Posterior vena cava (tissue), 2 donors: ENCODE measurements at regions of chr14 and their contacts with region 1.

Region 1: GRCh38 chr14:102249041-102249440 is 55.9 kb downstream of the MOK start:
- DNase-seq: peak; percentile 42

Region 2: GRCh38 chr14:101761032-101761880 is 487.8 kb before region 1 on chr14 and contains the start of gene PPP2R5C:
- intact Hi-C with region 1: no loop called
- DNase-seq: peak; percentile 97
- total RNA-seq, gene PPP2R5C: 132 to 135 TPM

Region 3: DNA sequence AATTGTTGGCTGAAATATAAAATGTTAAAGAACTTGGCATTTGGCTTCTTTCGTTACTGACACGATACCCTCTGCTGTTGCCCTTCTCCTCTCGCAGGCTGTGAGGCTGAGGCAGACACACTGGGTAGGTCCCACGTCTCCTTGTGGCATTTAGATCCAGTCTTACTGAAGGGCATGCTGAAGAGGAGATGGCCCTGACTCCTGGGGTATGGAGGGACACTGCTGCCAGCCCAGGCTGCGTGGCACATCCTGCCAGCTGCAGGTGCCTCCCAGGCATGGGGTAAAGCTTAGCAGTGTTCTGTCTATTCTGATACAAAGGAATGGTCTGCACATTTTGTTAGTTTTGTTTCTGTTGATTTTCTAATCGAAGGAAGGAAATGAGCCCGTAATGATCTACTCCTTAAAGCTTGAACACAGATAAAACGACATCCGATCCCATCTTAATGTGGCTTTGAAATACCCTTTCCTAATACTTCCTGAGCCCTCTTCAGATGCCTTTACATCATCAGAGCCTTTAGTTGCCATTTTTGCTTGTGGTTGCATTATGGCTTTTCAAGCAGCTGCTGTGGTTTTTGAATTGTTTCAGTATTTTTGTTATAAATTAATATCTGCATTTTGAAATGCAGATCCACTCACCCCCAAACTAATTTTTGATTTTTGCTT is 48.2 kb before region 1 on chr14:
- intact Hi-C with region 1: loop called in 1 of 2 experiments (anchors 1 kb)
- DNase-seq: no peak

Region 4: GRCh38 chr14:102304611-102305509 is 55.8 kb after region 1 on chr14 and contains the start of gene MOK:
- intact Hi-C with region 1: no loop called
- DNase-seq: peak; percentile 99
- total RNA-seq, gene MOK: 8.4 to 10.0 TPM